CD4-positive, alpha-beta T cell (primary cell): ENCODE measurements at regions of chr1 and their contacts with region 1.

Region 1: DNA sequence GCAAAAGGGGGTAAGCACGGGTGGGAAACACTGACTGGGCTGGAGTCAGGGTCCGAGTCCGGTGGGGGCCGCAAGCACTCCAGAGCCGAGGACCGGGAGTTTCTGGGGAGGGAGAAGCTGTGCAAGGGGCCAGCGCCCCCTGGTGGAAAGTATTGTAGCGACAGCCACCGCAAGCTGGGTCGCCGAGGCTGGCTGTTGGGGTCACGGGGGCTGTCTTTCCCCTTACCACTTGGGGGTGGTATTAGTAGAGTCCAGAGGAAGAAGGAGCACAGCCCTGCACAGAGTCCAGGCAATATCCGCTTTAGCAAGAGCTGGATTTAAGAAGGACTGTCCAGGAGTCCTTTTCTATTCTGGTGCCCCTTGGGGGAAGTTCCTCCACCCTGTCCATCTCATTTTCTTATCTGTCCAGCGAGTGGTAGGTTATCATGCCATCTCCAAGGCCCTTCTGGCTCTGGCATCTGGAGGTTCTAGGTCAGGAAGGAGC is 17.9 kb upstream of the ETV3 start:
- DNase-seq: peak; percentile 60 to 87 (median 72)
- ATAC-seq: peak; percentile 71
- H3K4me3 ChIP-seq: no peak overlapping the region
- H3K4me3 Mint-ChIP-seq: peak overlapping the region; percentile 53
- H3K27ac ChIP-seq: no peak overlapping the region
- H3K27ac Mint-ChIP-seq: no peak overlapping the region
- H3K4me1 ChIP-seq: peaks cover 31% of the 10 kb centered on the region
- H3K4me1 Mint-ChIP-seq: peaks cover 22% of the 10 kb centered on the region
- H3K27me3 ChIP-seq: peaks cover 0 to 9% of the 10 kb centered on the region in 2 experiments
- H3K27me3 Mint-ChIP-seq: peaks cover 23% of the 10 kb centered on the region
- CTCF ChIP-seq: peak; percentile 97

Region 2: DNA sequence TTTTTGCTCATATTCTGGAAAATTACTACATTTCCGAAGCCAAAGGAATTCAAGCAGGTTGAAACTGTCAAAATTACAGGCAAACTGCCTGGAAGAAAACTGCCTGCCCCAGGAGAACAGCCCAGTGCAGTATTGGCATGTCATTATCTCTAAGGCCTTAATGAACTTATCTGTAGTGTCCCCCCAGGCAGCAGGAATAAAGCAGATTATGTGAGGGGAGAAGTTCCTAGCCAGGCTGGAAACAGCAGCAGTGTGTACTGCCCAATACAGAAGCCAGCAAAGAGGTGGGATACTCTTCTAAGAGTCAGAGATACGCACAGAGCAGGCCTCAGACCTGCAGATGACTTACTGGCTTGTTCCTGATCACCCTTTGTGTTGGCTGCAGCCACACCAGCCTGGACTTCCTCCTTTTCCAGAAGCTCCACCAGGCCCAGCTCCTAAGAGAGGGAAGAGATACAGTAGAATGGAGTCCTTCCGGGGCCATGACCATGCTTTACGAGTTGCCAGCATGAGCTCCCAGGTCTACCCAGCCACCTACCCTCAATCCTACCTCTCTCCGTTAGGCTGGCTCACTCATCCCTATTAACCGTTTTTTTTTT is 595.4 kb before region 1 on chr1:
- CTCF ChIA-PET with region 1: no interaction called
- POLR2A ChIA-PET with region 1: no interaction called
- intact Hi-C with region 1: no loop called
- DNase-seq: no peak
- ATAC-seq: no peak
- H3K4me3 ChIP-seq: no peak overlapping the region
- H3K4me3 Mint-ChIP-seq: no peak overlapping the region
- H3K27ac ChIP-seq: no peak overlapping the region
- H3K27ac Mint-ChIP-seq: no peak overlapping the region
- H3K4me1 ChIP-seq: no peaks in the 10 kb centered on the region
- H3K4me1 Mint-ChIP-seq: no peaks in the 10 kb centered on the region
- H3K27me3 ChIP-seq: no peaks in the 10 kb centered on the region
- H3K27me3 Mint-ChIP-seq: no peaks in the 10 kb centered on the region
- CTCF ChIP-seq: no peak

Region 3: DNA sequence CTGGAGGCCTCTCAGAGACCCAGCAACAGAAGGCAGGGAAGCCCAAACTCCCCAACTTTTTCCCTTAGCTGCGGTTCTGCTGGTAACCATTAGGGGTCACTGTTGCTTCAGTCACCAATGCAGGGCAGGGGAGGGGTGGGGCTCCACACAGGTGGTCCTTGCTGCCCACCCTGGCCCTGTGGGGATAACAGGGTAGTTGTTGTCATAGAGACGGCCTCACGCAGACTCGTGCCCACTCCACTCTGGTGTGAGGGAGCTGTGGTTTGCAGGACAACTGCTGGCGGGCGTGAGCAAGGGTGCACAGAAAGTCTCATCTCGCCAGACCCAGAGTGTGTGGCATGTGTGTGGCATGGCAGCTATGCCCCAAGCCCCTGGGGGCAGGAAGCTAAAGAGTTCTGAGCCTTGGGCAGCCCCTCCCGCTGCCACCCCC is 317.1 kb before region 1 on chr1:
- CTCF ChIA-PET with region 1: no interaction called
- POLR2A ChIA-PET with region 1: no interaction called
- intact Hi-C with region 1: loop called in 1 of 2 experiments (anchors 10 kb)
- DNase-seq: peak in 11 of 14 experiments; percentile 34 to 74 (median 42)
- ATAC-seq: peak; percentile 84
- H3K4me3 ChIP-seq: no peak overlapping the region
- H3K4me3 Mint-ChIP-seq: no peak overlapping the region
- H3K27ac ChIP-seq: no peak overlapping the region
- H3K27ac Mint-ChIP-seq: no peak overlapping the region
- H3K4me1 ChIP-seq: peaks cover 24% of the 10 kb centered on the region
- H3K4me1 Mint-ChIP-seq: peaks cover 12% of the 10 kb centered on the region
- H3K27me3 ChIP-seq: peaks cover 27 to 37% of the 10 kb centered on the region in 2 experiments
- H3K27me3 Mint-ChIP-seq: peaks cover 60% of the 10 kb centered on the region
- CTCF ChIP-seq: peak; percentile 85

Region 4: DNA sequence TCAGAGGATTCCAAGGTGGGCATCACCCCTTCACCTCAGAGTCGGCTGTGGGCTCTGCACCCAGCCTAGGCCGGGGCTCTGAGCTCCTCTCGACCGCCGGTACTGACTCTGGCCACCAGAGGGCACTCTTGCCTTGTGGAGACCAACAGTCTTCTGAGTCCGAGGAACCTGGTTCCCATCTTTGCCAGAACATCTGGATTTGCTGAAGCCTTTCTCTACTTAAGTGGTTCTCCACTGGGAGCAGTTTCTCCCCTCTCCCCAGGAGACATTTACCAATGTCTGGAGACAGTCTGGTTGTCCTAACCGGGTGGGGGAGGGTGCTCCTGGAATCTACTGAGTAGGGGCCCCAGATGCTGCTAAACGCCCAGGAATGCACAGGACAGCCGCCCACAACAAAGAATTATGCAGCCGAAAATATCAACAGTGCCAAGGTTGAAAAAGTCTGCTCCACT is 65.9 kb before region 1 on chr1:
- CTCF ChIA-PET with region 1: interaction called, 241 read pairs
- POLR2A ChIA-PET with region 1: interaction called, 26 read pairs
- intact Hi-C with region 1: loop called (anchors 1 kb)
- DNase-seq: peak; percentile 78 to 92 (median 86)
- ATAC-seq: peak; percentile 83
- H3K4me3 ChIP-seq: no peak overlapping the region
- H3K4me3 Mint-ChIP-seq: no peak overlapping the region
- H3K27ac ChIP-seq: no peak overlapping the region
- H3K27ac Mint-ChIP-seq: no peak overlapping the region
- H3K4me1 ChIP-seq: peaks cover 7% of the 10 kb centered on the region
- H3K4me1 Mint-ChIP-seq: peaks cover 5% of the 10 kb centered on the region
- H3K27me3 ChIP-seq: peaks cover 0 to 2% of the 10 kb centered on the region in 2 experiments
- H3K27me3 Mint-ChIP-seq: peaks cover 6% of the 10 kb centered on the region
- CTCF ChIP-seq: peak; percentile 95

Region 5: DNA sequence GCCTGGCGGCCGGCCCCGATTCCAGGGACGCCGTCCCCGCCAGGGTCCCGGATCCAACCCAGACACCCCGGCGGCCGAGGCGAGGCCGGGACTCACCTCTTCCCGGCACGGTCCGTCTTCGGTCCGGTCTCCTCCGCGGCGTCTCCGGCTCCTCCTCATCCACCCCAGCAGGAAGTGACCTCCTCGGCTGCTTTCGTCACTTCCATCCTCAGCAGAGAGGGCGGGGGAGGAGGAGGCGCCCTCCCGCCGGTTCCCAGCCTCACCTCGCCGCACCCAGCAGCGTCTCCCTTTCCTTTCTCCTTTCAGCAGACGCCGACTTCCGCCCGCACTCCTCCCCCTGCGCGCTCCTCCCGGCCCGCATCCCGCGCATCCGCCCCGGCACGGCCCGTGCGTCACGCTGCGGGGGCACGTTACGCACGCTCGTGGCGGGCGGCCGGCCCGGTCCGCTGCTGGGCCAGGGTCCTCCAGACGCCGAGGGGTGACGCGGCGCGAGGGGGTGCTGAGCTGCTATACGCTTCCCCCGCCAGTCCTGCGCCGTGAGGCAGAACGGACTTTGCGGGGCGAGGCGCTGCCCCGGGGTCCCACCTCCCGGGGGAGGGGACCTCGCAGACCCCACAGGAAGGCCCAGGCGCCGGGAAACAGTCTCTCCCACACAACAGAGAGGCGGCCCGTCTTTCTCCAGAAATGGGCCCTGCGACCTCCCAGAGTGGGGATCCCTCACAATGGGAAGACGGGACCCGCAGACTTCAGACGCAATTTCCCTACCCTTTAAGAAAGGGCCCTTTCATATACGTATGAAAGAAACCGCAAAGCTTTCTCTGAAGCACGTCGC is 17.7 kb before region 1 on chr1 and contains the start of gene ETV3:
- CTCF ChIA-PET with region 1: interaction called, 13 read pairs
- POLR2A ChIA-PET with region 1: interaction called, 6 read pairs
- intact Hi-C with region 1: no loop called
- DNase-seq: peak; percentile 70 to 96 (median 81)
- ATAC-seq: peak; percentile 81
- H3K4me3 ChIP-seq: peak within 1 kb of the TSS; percentile 84
- H3K4me3 Mint-ChIP-seq: peak within 1 kb of the TSS; percentile 94
- H3K27ac ChIP-seq: peak within 1 kb of the TSS; percentile 90 to 98
- H3K27ac Mint-ChIP-seq: peak within 1 kb of the TSS; percentile 90
- H3K4me1 ChIP-seq: peaks cover 48% of the 10 kb centered on the region
- H3K4me1 Mint-ChIP-seq: peaks cover 60% of the 10 kb centered on the region
- H3K27me3 ChIP-seq: no peaks in the 10 kb centered on the region
- H3K27me3 Mint-ChIP-seq: no peaks in the 10 kb centered on the region
- CTCF ChIP-seq: no peak
- total RNA-seq, gene ETV3: 115 to 117 TPM